Naive thymus-derived CD8-positive, alpha-beta T cell (primary cell): ENCODE measurements at regions of chr5 and their contacts with region 1.

Region 1: GRCh38 chr5:159209438-159210305 is at the start of gene RNF145:
- DNase-seq: peak; percentile 84 to 96 (median 94)
- ATAC-seq: peak; percentile 78 to 79
- H3K4me3 Mint-ChIP-seq: peak within 1 kb of the TSS; percentile 92 to 100 (median 98)
- H3K27ac Mint-ChIP-seq: peak within 1 kb of the TSS; percentile 98 to 100 (median 98)
- H3K4me1 Mint-ChIP-seq: peaks cover 21 to 56% (median 47%) of the 10 kb centered on the region in 4 donors
- H3K27me3 Mint-ChIP-seq: no peaks in the 10 kb centered on the region
- polyA plus RNA-seq, gene RNF145: 6.3 to 11.2 (median 7.4) TPM

Region 2: GRCh38 chr5:159139802-159140201 is 69.9 kb before region 1 on chr5:
- POLR2A ChIA-PET with region 1: no interaction called
- DNase-seq: no peak
- ATAC-seq: no peak
- H3K4me3 Mint-ChIP-seq: no peak overlapping the region
- H3K27ac Mint-ChIP-seq: no peak overlapping the region
- H3K4me1 Mint-ChIP-seq: no peaks in the 10 kb centered on the region
- H3K27me3 Mint-ChIP-seq: peaks cover 11 to 33% (median 29%) of the 10 kb centered on the region in 5 donors

Region 3: DNA sequence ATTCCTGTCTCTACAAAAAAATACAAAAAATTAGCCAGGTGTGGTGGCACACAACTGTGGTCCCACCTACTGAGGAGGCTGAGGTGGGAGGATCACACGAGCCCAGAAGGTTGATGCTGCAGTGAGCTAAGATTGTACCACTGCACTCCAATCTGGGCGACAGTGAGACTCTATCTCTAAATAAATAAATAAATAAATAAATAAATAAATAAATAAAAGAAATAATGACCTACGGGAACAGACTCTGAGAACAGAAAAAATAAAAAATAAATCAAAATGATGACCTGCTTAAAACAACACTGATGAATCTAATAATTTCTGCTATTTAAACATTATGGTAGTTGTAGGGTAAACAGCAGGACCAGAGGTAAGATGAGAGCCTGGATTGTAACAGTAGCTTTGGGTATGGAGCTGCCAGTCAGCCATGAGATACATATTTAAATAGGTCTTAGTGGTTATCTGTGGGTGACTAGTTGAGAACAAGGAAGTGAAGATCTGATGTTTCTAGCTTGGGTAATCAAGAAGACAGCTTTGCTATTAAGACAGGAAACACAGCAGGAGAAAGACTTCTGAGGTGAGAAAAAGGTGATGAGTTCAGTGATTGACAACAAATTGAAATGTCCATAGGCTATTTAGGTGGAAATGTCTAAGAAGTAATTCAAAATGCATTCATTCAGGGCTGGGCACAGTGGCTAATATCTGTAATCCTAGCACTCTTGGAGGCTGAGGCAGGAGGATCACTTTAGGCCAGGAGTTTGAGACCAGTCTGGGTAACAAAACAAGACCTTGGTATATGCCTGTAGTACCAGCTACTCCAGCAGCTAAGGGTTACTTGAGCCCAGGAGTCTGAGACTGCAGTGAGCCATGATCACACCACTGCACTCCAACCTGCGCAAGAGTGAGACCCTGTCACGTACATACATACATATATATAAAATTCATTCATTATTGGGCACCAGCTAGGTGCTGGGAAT is 11.3 kb before region 1 on chr5:
- POLR2A ChIA-PET with region 1: interaction called, 42 read pairs
- DNase-seq: peak in 2 of 10 donors; percentile 30 to 31
- ATAC-seq: peak; percentile 79 to 87
- H3K4me3 Mint-ChIP-seq: peak overlapping the region in 9 of 10 donors; percentile 12 to 74 (median 44)
- H3K27ac Mint-ChIP-seq: peak overlapping the region; percentile 29 to 94 (median 76)
- H3K4me1 Mint-ChIP-seq: peaks cover 41 to 79% (median 75%) of the 10 kb centered on the region in 4 donors
- H3K27me3 Mint-ChIP-seq: no peaks in the 10 kb centered on the region

Region 4: GRCh38 chr5:159262859-159263567 is 53.3 kb after region 1 on chr5 and contains the start of gene UBLCP1:
- POLR2A ChIA-PET with region 1: interaction called, 18 read pairs
- DNase-seq: peak; percentile 64 to 88 (median 78)
- ATAC-seq: peak; percentile 85 to 88
- H3K4me3 Mint-ChIP-seq: peak within 1 kb of the TSS; percentile 89 to 99 (median 99)
- H3K27ac Mint-ChIP-seq: peak within 1 kb of the TSS; percentile 96 to 100 (median 98)
- H3K4me1 Mint-ChIP-seq: peaks cover 25 to 54% (median 50%) of the 10 kb centered on the region in 4 donors
- H3K27me3 Mint-ChIP-seq: peaks cover 0 to 2% (median 0%) of the 10 kb centered on the region in 5 donors
- polyA plus RNA-seq, gene UBLCP1: 60.7 to 68.4 (median 64.1) TPM